Endothelial cell of umbilical vein (primary cell): ENCODE measurements at regions of chr7 and their contacts with region 1.

Region 1: DNA sequence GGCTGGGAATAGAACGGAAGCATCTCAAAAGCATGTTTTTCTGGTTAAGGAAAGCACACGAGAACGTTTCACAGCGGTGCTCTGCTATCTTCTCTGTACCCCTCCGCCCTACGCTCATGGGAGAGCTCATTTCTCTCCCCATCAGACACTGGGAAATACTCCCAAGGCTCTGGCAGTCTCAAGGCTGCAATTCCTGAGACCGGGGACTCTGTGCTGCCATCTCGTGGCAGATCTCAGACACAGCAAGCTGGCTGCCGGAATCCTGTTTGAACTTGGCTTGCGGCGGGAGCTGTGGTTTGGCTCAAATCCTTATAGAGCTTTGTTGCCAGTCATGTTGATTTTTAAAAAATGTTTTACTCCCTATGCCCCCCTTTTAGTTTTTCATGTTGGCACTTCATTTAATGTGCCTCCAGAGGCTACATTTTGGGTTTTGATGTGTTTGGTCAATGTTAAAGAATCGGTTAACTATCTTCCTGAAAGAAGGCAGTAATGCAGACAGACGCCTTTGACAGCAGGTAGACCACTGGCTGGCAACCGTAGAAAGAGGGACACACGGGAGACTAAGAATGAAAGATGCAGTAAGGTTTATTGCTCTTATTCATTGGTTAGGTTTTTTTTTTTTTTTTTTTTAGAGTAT is 27.6 kb downstream of the BMPER start:
- DNase-seq: peak; percentile 85
- H3K4me3 ChIP-seq: peak overlapping the region in 2 of 3 experiments; percentile 13 to 17
- H3K27ac ChIP-seq: no peak overlapping the region
- H3K4me1 ChIP-seq: no peaks in the 10 kb centered on the region
- H3K27me3 ChIP-seq: peaks cover 0 to 1% of the 10 kb centered on the region in 2 experiments
- CTCF ChIP-seq: peak; percentile 95
- POLR2A ChIP-seq: no peak

Region 2: DNA sequence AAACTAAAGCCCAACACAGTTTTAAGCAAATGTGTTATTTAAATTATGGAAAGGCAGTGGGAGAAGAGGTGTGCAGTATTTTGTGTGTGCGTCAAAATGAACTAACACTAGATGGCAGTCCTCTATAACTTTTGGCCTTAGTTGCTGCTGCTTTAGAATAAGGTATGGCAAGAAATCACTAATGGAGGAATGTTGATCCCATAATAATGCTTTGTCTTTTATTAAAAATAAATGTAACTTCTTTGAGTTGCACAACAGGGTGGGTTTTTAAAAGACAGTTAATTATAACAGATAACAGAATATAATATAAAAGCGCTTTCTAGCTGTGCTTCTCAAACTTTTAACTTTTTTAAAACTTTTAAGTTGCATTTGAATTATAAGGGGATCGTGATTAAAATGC is 747.2 kb before region 1 on chr7:
- CTCF ChIA-PET with region 1: interaction called, 109 read pairs
- POLR2A ChIA-PET with region 1: no interaction called
- dilution Hi-C with region 1: no loop called
- intact Hi-C with region 1: loop called (anchors 1 kb)
- DNase-seq: peak; percentile 63
- H3K4me3 ChIP-seq: no peak overlapping the region
- H3K27ac ChIP-seq: no peak overlapping the region
- H3K4me1 ChIP-seq: no peaks in the 10 kb centered on the region
- H3K27me3 ChIP-seq: no peaks in the 10 kb centered on the region
- CTCF ChIP-seq: peak; percentile 34 to 52
- POLR2A ChIP-seq: no peak

Region 3: GRCh38 chr7:33418251-33418701 is 514.7 kb before region 1 on chr7:
- CTCF ChIA-PET with region 1: interaction called, 61 read pairs
- POLR2A ChIA-PET with region 1: no interaction called
- dilution Hi-C with region 1: no loop called
- intact Hi-C with region 1: loop called (anchors 2 kb)
- DNase-seq: no peak
- H3K4me3 ChIP-seq: no peak overlapping the region
- H3K27ac ChIP-seq: no peak overlapping the region
- H3K4me1 ChIP-seq: no peaks in the 10 kb centered on the region
- H3K27me3 ChIP-seq: no peaks in the 10 kb centered on the region
- CTCF ChIP-seq: no peak
- POLR2A ChIP-seq: no peak

Region 4: GRCh38 chr7:33495207-33495606 is 437.7 kb before region 1 on chr7:
- CTCF ChIA-PET with region 1: no interaction called
- POLR2A ChIA-PET with region 1: no interaction called
- dilution Hi-C with region 1: no loop called
- intact Hi-C with region 1: no loop called
- DNase-seq: no peak
- H3K4me3 ChIP-seq: no peak overlapping the region
- H3K27ac ChIP-seq: no peak overlapping the region
- H3K4me1 ChIP-seq: no peaks in the 10 kb centered on the region
- H3K27me3 ChIP-seq: no peaks in the 10 kb centered on the region
- CTCF ChIP-seq: no peak
- POLR2A ChIP-seq: no peak

Region 5: GRCh38 chr7:33722383-33723101 is 210.4 kb before region 1 on chr7:
- CTCF ChIA-PET with region 1: interaction called, 14 read pairs
- POLR2A ChIA-PET with region 1: no interaction called
- dilution Hi-C with region 1: no loop called
- intact Hi-C with region 1: no loop called
- DNase-seq: peak; percentile 59
- H3K4me3 ChIP-seq: no peak overlapping the region
- H3K27ac ChIP-seq: peak overlapping the region; percentile 33
- H3K4me1 ChIP-seq: peaks cover 55% of the 10 kb centered on the region
- H3K27me3 ChIP-seq: no peaks in the 10 kb centered on the region
- CTCF ChIP-seq: no peak
- POLR2A ChIP-seq: no peak

Region 6: GRCh38 chr7:33854801-33855350 is 78.1 kb before region 1 on chr7:
- CTCF ChIA-PET with region 1: no interaction called
- POLR2A ChIA-PET with region 1: no interaction called
- dilution Hi-C with region 1: no loop called
- intact Hi-C with region 1: no loop called
- DNase-seq: no peak
- H3K4me3 ChIP-seq: no peak overlapping the region
- H3K27ac ChIP-seq: no peak overlapping the region
- H3K4me1 ChIP-seq: no peaks in the 10 kb centered on the region
- H3K27me3 ChIP-seq: no peaks in the 10 kb centered on the region
- CTCF ChIP-seq: no peak
- POLR2A ChIP-seq: no peak

Region 7: GRCh38 chr7:33904681-33905388 is 28.1 kb before region 1 on chr7:
- CTCF ChIA-PET with region 1: interaction called, 51 read pairs
- POLR2A ChIA-PET with region 1: no interaction called
- dilution Hi-C with region 1: no loop called
- intact Hi-C with region 1: no loop called
- DNase-seq: peak; percentile 47
- H3K4me3 ChIP-seq: peak overlapping the region; percentile 49 to 71 (median 69)
- H3K27ac ChIP-seq: no peak overlapping the region
- H3K4me1 ChIP-seq: peaks cover 11% of the 10 kb centered on the region
- H3K27me3 ChIP-seq: peaks cover 15 to 36% of the 10 kb centered on the region in 2 experiments
- CTCF ChIP-seq: peak; percentile 9 to 35
- POLR2A ChIP-seq: no peak

Region 8: DNA sequence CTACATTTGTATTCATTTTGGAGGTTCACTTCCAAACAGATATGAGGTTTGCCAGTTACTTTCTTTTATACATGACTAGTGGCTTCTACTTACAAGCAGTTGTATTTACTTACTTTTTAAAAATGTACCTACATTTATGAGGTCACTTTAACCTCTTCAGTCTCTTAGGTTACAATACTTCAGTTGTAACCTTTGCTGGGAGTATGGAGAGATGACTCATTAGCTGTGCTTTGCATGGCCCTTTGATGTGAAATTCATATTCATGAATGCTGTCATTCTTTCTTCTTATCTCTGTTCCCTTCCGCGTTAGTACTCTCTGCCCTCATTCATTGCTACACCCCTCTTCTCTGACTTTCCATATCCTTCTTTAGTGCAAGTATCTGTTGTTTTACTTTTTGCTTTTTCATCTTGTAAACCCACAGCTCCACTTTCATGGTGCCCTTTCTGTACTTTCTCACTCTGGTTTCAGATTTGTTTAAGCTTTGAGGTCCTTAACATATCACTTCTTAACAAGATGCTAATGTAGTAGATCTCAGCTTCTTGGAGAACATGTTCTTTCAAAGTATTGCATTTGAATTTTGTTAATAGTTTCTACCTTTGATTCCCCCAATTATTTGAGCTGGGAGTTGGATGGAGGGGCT is 136.8 kb after region 1 on chr7:
- CTCF ChIA-PET with region 1: interaction called, 11 read pairs
- POLR2A ChIA-PET with region 1: no interaction called
- dilution Hi-C with region 1: no loop called
- intact Hi-C with region 1: no loop called
- DNase-seq: peak; percentile 62
- H3K4me3 ChIP-seq: no peak overlapping the region
- H3K27ac ChIP-seq: peak overlapping the region; percentile 41
- H3K4me1 ChIP-seq: peaks cover 22% of the 10 kb centered on the region
- H3K27me3 ChIP-seq: no peaks in the 10 kb centered on the region
- CTCF ChIP-seq: no peak
- POLR2A ChIP-seq: no peak

Region 9: GRCh38 chr7:34143402-34143801 is 210.5 kb after region 1 on chr7:
- CTCF ChIA-PET with region 1: no interaction called
- POLR2A ChIA-PET with region 1: no interaction called
- dilution Hi-C with region 1: no loop called
- intact Hi-C with region 1: no loop called
- DNase-seq: no peak
- H3K4me3 ChIP-seq: no peak overlapping the region
- H3K27ac ChIP-seq: no peak overlapping the region
- H3K4me1 ChIP-seq: no peaks in the 10 kb centered on the region
- H3K27me3 ChIP-seq: no peaks in the 10 kb centered on the region
- CTCF ChIP-seq: no peak
- POLR2A ChIP-seq: no peak

Region 10: DNA sequence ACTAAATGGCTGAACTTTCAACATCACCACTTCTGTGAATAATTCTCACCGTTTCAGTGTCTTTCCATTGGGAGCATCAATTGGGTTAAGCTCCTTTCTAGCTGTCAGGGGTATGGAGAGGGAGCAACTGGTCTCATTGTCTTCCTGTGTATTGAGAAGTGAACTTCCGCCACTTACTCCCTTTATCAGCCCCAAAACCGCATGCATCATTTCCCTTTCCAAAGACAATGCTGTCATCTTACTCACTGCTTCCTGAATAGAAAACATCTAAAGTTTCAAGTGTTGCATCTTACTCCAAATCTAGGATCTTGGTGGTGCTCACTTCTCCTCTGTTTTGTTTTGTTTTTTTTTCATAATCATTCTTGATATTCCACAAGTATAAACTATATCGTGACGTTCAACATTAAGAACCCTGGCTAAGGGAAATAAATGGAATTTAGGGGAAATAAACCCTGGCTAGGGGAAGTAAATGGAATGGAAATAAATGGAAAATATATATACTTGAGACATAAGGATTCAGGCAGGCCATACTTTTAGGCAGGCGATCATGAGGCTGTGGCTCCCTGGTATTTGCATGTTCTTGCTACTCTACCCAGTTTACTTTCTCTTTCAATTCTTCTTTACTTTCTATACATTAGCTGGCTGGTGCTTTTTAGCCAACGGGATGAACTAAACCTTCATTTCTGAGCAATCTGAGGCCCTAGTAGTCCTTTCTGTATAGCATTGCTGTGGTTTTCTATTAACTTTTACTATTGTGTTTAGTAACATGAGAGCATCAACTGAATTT is 344.3 kb after region 1 on chr7:
- CTCF ChIA-PET with region 1: no interaction called
- POLR2A ChIA-PET with region 1: no interaction called
- dilution Hi-C with region 1: no loop called
- intact Hi-C with region 1: no loop called
- DNase-seq: peak; percentile 84
- H3K4me3 ChIP-seq: peak overlapping the region in 1 of 3 experiments; percentile 29
- H3K27ac ChIP-seq: peak overlapping the region; percentile 86
- H3K4me1 ChIP-seq: peaks cover 25% of the 10 kb centered on the region
- H3K27me3 ChIP-seq: no peaks in the 10 kb centered on the region
- CTCF ChIP-seq: no peak
- POLR2A ChIP-seq: peak; percentile 58